ENCODE measurements at regions of chr5 and their contacts with region 1.

Region 1: DNA sequence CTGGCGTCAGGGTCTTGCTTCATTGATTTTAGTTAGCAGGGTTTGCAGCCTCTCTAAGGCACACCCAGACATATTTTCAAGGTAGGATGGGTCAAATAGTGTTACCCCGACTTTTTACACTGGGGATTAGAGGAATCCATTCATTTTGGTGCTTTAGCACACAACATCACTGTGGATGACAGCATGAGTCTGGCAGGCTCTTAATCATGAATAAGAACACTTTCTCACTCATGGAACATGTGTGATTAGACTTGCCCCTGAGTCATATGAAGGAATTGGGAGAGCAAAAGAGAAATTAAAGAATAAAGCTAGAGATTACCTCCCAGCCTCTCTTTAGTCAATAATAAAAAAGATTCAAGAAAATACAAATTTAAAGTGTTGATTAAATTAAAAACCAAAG is 175.6 kb downstream of the SEMA5A start:
- DNase-seq: no peak
- H3K4me3 ChIP-seq: no peak overlapping the region
- H3K27ac ChIP-seq: no peak overlapping the region
- H3K4me1 ChIP-seq: no peaks in the 10 kb centered on the region
- H3K27me3 ChIP-seq: no peaks in the 10 kb centered on the region
- CTCF ChIP-seq: no peak

Region 2: GRCh38 chr5:9513827-9514226 is 143.6 kb after region 1 on chr5:
- intact Hi-C with region 1: loop called (anchors 10 kb)
- DNase-seq: no peak
- H3K4me3 ChIP-seq: no peak overlapping the region
- H3K27ac ChIP-seq: no peak overlapping the region
- H3K4me1 ChIP-seq: no peaks in the 10 kb centered on the region
- H3K27me3 ChIP-seq: no peaks in the 10 kb centered on the region
- CTCF ChIP-seq: no peak